Prostate gland (tissue), 2 donors: ENCODE measurements at regions of chr2 and their contacts with region 1.

Region 1: DNA sequence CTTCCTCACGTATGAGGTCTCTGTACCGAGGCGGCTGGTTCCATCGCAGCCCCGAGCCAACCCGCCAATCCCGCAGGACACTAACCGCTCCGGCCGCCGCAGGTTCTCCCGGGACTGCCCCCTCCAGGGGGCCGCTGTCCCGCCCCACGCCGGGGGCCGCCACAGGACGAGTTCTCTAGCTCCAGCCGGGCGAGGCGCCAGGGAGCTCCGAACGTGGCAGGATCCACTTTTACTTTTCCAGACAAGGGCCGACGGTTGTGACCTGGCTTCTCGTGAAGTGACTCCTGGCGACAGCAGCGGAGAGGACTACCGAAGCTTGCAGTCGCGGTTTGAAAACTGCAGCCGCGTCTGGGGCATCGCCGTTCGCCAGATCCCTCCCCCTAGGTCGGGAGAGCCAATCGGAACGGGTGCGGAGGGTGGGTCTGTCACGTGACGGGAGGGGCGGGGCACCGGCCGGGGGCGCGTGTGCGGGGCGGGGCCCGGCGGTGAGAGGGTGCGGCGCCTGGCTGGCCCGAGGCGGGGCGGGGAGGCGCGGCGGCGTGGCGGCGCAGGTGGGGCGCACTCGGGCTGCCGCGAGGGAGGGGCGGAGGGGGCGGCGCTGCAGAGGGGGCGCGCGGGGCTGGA is at the start of gene STK17B:
- DNase-seq: peak; percentile 96
- H3K4me3 ChIP-seq: peak within 1 kb of the TSS; percentile 95
- H3K27ac ChIP-seq: peak within 1 kb of the TSS; percentile 92 to 93
- H3K4me1 ChIP-seq: no peaks in the 10 kb centered on the region
- H3K27me3 ChIP-seq: no peaks in the 10 kb centered on the region
- CTCF ChIP-seq: peak in 3 of 4 experiments; percentile 7 to 40 (median 40)
- POLR2A ChIP-seq: peak; percentile 96
- total RNA-seq, gene STK17B: 24.6 to 25.0 TPM

Region 2: DNA sequence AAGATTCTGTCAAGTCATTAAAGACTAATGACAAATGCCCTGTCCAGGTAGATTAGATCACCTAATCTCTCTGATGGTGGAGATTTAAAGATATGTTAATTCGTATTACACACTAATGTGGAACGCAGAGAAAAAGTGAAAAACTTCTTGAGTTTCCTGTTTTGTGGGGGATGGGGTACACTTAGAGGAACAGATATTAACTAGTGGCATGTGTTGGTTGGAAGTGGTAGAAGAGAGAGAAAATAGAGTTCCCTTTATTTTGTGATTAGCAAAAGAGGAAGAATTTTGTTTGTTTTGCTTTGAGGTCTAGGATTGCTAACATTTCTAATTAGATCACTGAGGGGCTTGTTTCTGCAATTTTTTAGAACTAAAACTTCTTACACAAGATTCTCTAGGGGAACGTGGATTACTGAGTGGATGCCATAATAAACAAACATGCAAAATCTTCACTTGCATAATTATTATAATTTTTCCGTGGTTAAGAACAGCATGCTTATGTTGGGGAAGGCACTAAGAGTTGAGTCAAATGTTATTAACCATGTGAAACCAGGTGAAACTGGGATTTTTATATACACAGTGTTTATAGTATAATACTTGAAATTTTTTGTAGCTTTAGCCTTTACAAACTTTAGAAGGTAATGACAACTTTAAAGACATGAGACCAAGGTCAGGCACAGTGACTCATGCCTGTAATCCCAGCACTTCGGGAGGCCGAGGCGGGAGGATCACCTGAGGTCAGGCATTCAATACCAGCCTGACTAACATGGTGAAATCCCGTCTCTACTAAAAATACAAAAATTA is 97.4 kb after region 1 on chr2:
- intact Hi-C with region 1: loop called (anchors 2 kb)
- DNase-seq: no peak
- H3K4me3 ChIP-seq: no peak overlapping the region
- H3K27ac ChIP-seq: peak overlapping the region; percentile 49 to 64
- H3K4me1 ChIP-seq: peaks cover 8% of the 10 kb centered on the region
- H3K27me3 ChIP-seq: no peaks in the 10 kb centered on the region
- CTCF ChIP-seq: no peak
- POLR2A ChIP-seq: no peak